A673 (cell line): ENCODE measurements at regions of chr3 and their contacts with region 1.

Region 1: DNA sequence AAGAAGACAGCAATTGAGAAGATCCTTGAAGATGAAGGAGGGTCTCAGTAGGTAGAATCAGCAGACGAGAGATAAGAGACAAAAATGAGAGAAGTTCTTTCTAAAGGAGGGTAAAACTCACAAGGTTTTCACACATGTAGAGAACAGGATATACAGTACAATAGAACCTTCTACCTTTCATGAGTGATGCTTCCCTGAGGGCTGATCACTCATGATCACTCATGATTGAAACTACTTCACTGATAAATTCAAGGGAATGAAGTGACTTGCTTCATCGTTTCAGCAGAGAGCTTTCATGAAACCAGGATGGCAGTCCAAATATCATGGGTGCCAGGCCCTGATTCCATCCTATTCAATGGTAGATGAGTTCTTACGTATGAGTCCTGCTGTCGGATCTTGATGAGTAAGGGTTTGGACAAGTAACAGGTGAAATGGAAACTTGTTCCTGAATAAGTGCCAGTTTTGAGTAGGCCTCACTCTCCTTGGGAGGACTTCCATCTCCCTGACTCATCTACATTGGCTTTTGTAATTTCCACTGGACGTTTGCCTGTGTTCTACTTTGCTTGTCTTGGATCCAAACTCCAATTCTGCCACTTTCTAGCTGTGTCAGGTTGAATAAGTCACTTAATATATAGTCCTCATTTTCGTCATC is 9.6 kb upstream of the CLDN16 start:
- DNase-seq: no peak
- H3K4me3 ChIP-seq: no peak overlapping the region
- H3K27ac ChIP-seq: peak overlapping the region; percentile 84
- H3K4me1 ChIP-seq: peaks cover 71% of the 10 kb centered on the region
- H3K27me3 ChIP-seq: no peaks in the 10 kb centered on the region
- CTCF ChIP-seq: no peak

Region 2: GRCh38 chr3:189961525-189962161 is 416.7 kb before region 1 on chr3:
- CTCF ChIA-PET with region 1: interaction called, 3 read pairs
- POLR2A ChIA-PET with region 1: no interaction called
- intact Hi-C with region 1: loop called (anchors 5 kb)
- DNase-seq: peak; percentile 94
- H3K4me3 ChIP-seq: no peak overlapping the region
- H3K27ac ChIP-seq: no peak overlapping the region
- H3K4me1 ChIP-seq: peaks cover 29% of the 10 kb centered on the region
- H3K27me3 ChIP-seq: no peaks in the 10 kb centered on the region
- CTCF ChIP-seq: peak; percentile 93